Right ventricle myocardium inferior (tissue), 1 donor: ENCODE measurements at regions of chr9 and their contacts with region 1.

Region 1: DNA sequence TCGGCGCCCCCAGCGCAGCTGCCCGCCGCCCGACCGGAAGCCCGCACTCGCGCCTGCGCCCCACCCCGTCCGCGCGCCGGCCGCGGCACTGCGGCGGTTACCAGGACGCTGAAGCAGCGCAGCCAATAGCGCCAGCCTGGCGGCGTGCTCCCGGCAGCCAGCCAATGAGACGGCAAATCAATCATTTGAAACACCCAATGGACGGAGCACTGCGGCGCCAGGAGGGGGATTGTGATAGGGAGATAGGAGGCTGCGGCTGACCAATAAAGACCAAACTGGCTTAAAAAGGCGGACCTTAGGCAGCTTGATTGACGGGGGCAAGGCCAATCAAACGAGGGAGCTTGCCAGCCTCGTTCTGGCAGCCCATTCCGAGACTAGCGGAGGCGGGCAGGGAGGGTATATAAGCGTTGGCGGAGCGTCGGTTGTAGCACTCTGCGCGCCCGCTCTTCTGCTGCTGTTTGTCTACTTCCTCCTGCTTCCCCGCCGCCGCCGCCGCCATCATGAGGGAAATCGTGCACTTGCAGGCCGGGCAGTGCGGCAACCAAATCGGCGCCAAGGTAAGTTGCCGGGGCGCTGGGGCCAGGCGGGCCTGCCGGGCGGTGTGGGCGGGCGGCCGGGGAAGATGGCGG is at the start of gene TUBB4B:
- DNase-seq: peak; percentile 99
- ATAC-seq: peak; percentile 91
- total RNA-seq, gene TUBB4B: 620 TPM

Region 2: DNA sequence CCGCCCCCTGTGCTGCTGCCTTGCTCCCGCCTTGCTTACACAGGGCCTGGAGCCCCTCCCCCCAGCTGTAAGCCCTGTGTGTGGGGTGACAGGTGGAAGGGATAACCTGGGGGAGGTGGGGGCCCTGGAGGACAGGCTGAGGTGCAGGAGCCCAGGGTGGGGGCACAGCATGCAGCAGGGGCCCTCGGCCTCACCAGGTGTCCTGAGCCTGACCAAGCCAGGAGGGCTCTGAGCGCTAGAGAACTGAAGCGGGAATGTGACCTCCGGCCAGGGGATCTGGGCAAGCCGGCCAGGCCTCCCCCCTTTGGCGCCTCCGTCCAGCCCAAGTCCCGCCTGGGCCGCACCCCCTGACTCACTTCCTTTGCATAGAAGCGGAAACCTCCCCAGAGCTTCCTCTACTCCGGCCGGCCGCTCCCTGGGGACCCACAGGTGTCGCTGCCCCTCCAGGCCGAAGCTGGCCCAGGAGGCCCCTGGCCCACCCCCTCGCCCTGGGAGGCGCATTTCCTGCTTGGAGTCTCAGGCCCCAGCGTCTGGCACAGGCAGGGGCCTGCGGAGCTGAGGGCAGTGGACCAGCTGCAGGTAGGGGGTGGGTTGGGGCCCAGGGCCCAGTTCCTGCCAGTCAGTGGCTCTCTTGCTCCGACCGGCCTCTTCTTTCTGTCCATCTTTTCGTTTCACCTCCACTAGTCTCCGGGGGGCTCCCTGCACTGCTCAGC is 36.5 kb after region 1 on chr9 and contains the start of gene TOR4A:
- intact Hi-C with region 1: loop called (anchors 2 kb)
- DNase-seq: peak; percentile 94
- ATAC-seq: peak; percentile 66
- total RNA-seq, gene TOR4A: 16.5 TPM

Region 3: GRCh38 chr9:137301081-137301947 is 60.3 kb after region 1 on chr9:
- intact Hi-C with region 1: loop called (anchors 2 kb)
- DNase-seq: peak; percentile 50
- ATAC-seq: no peak